Sciatic nerve (tissue), 2 donors: ENCODE measurements at regions of chr7 and their contacts with region 1.

Region 1: GRCh38 chr7:107725151-107725740 is 18.7 kb upstream of the CBLL1 start:
- DNase-seq: peak; percentile 62
- ATAC-seq: no peak

Region 2: DNA sequence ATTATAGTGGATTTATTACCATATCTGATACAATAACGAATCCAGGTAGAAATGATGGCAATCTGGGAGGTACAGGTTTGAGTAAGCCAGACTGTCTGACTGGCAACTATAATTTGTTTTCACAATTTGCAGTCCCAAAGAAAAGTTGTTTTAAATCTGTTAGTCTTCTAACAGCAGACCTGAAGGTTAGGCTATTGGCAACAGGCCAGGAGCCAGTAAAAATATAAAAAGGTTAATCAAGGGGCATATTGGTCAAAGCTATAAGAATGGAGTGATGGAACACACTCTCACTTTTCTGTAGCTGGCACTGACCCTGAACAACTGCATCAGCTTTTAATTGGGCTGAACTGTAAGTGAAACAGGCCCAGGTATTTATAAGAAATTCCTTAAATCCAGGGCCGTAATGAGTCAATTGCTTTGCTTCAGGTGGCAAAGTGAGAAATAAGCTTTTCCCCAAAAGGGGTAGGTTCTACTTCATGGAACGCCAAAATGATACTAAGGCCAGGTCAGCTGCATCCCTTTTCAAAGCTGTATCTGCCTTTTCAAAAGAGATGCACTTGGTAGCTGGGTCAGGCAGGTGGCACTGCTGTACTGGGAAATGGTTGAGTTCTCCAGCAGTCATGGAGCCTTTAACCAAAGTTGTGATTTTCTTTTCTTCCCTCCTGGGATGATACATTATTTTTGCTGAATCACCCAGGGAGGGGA is 262.4 kb before region 1 on chr7:
- intact Hi-C with region 1: loop called (anchors 10 kb)
- DNase-seq: peak; percentile 72
- ATAC-seq: peak; percentile 96

Region 3: DNA sequence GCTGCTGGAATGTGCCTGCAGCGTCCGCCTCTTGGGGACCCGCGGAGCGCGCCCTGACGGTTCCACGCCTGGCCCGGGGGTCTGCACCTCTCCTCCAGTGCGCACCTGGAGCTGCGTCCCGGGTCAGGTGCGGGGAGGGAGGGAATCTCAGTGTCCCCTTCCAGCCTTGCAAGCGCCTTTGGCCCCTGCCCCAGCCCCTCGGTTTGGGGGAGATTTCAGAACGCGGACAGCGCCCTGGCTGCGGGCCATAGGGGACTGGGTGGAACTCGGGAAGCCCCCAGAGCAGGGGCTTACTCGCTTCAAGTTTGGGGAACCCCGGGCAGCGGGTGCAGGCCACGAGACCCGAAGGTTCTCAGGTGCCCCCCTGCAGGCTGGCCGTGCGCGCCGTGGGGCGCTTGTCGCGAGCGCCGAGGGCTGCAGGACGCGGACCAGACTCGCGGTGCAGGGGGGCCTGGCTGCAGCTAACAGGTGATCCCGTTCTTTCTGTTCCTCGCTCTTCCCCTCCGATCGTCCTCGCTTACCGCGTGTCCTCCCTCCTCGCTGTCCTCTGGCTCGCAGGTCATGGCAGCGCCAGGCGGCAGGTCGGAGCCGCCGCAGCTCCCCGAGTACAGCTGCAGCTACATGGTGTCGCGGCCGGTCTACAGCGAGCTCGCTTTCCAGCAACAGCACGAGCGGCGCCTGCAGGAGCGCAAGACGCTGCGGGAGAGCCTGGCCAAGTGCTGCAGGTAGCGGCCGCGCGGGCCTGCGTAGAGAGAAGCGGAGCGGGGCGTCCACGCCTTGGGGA is 64.0 kb before region 1 on chr7:
- intact Hi-C with region 1: no loop called
- DNase-seq: peak; percentile 69
- ATAC-seq: peak; percentile 83

Region 4: GRCh38 chr7:109336531-109336930 is 1611.3 kb after region 1 on chr7:
- intact Hi-C with region 1: no loop called
- DNase-seq: no peak
- ATAC-seq: no peak